ENCODE measurements at regions of chr11 and their contacts with region 1.

Region 1: GRCh38 chr11:62427630-62428233 is 8.9 kb downstream of the SCGB1A1 start:
- DNase-seq: no peak
- H3K4me3 ChIP-seq: no peak overlapping the region
- H3K27ac ChIP-seq: no peak overlapping the region
- H3K4me1 ChIP-seq: no peaks in the 10 kb centered on the region
- H3K27me3 ChIP-seq: peaks cover 0 to 3% of the 10 kb centered on the region in 2 experiments
- CTCF ChIP-seq: no peak
- POLR2A ChIP-seq: no peak

Region 2: DNA sequence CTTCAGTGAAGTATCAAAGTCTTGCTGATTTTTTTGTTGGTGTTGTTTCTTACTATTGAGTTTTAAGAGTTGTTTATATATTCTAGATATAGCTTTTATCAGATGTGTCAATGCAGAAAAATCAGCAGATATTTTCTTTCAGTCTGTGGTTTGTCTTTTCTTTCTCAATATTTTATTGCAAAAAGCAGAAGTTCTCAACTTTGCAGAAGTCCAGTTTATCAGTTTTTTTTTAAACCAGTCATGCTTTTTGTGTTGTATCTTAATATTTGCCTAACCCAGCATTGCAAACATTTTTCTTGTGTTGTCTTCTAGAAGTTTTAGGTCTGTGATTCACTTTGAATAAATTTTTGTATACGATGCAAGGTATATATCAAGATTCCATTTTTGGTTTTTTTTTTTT is 83.5 kb before region 1 on chr11:
- CTCF ChIA-PET with region 1: no interaction called
- POLR2A ChIA-PET with region 1: no interaction called
- dilution Hi-C with region 1: no loop called
- intact Hi-C with region 1: no loop called
- DNase-seq: no peak
- H3K4me3 ChIP-seq: no peak overlapping the region
- H3K27ac ChIP-seq: no peak overlapping the region
- H3K4me1 ChIP-seq: peaks cover 17% of the 10 kb centered on the region
- H3K27me3 ChIP-seq: no peaks in the 10 kb centered on the region
- CTCF ChIP-seq: no peak
- POLR2A ChIP-seq: no peak

Region 3: DNA sequence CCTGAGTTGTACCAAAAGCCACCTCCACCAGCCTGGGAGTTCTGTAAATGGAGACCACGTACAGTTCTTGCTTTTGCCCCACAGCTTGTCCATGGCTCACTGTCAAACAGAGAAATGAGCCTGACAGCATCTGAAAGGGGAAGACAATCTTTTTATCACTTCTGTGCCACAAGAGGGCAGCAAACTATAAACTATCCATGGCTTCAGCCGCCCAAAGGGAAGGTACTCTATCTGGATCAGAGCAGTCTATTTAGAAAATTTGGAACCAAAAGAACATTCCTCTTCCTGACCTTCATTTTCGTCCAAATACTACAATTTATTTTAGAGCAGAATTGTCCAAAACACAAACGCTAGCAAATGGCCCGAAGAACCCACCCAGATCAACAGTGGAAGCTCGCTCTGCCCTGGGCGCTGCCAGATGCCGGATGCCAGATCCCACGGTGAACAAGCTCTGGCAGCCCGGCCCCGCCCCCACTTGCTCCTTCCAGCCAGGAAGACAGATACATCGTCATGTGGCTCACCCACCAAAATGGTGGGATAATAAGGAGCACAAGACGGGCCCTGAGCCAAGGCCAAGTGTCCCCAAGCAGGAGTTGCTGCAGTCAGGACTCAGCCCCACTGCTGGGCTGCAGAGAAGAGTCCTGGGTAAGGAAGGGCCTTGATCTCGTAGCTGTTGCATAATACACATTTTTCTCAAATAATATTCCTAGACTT is 32.8 kb before region 1 on chr11:
- CTCF ChIA-PET with region 1: interaction called, 65 read pairs
- POLR2A ChIA-PET with region 1: interaction called, 4 read pairs
- dilution Hi-C with region 1: no loop called
- intact Hi-C with region 1: no loop called
- DNase-seq: peak; percentile 86
- H3K4me3 ChIP-seq: peak overlapping the region; percentile 20 to 71 (median 38)
- H3K27ac ChIP-seq: peak overlapping the region; percentile 15
- H3K4me1 ChIP-seq: peaks cover 4% of the 10 kb centered on the region
- H3K27me3 ChIP-seq: no peaks in the 10 kb centered on the region
- CTCF ChIP-seq: peak; percentile 47 to 56
- POLR2A ChIP-seq: no peak

Region 4: DNA sequence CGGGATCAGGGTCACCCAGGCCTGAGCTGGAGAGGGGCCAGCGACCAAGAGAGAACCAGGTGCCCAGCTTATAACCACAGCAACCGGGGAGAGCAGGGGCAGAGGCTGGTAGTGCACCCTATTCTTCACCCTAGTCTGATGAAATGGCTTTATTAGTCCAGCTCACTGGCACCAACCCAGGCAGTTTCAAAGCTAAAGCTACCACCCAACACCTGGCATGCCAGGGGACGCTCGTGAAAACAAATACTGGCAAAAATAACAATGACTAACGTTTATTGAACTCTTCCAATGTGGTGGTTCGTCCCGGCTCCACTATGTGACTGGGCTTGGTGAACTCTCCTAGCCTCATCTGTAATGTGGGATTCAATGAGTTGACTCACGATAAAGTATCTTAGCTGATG is 21.7 kb after region 1 on chr11:
- CTCF ChIA-PET with region 1: interaction called, 23 read pairs
- POLR2A ChIA-PET with region 1: no interaction called
- dilution Hi-C with region 1: no loop called
- intact Hi-C with region 1: no loop called
- DNase-seq: no peak
- H3K4me3 ChIP-seq: no peak overlapping the region
- H3K27ac ChIP-seq: no peak overlapping the region
- H3K4me1 ChIP-seq: no peaks in the 10 kb centered on the region
- H3K27me3 ChIP-seq: no peaks in the 10 kb centered on the region
- CTCF ChIP-seq: no peak
- POLR2A ChIP-seq: no peak

Region 5: GRCh38 chr11:62497132-62497915 is 69.6 kb after region 1 on chr11:
- CTCF ChIA-PET with region 1: interaction called, 21 read pairs
- POLR2A ChIA-PET with region 1: no interaction called
- dilution Hi-C with region 1: no loop called
- intact Hi-C with region 1: loop called (anchors 2 kb)
- DNase-seq: peak; percentile 68
- H3K4me3 ChIP-seq: no peak overlapping the region
- H3K27ac ChIP-seq: peak overlapping the region; percentile 58
- H3K4me1 ChIP-seq: peaks cover 25% of the 10 kb centered on the region
- H3K27me3 ChIP-seq: no peaks in the 10 kb centered on the region
- CTCF ChIP-seq: peak; percentile 27 to 33
- POLR2A ChIP-seq: no peak

Region 6: DNA sequence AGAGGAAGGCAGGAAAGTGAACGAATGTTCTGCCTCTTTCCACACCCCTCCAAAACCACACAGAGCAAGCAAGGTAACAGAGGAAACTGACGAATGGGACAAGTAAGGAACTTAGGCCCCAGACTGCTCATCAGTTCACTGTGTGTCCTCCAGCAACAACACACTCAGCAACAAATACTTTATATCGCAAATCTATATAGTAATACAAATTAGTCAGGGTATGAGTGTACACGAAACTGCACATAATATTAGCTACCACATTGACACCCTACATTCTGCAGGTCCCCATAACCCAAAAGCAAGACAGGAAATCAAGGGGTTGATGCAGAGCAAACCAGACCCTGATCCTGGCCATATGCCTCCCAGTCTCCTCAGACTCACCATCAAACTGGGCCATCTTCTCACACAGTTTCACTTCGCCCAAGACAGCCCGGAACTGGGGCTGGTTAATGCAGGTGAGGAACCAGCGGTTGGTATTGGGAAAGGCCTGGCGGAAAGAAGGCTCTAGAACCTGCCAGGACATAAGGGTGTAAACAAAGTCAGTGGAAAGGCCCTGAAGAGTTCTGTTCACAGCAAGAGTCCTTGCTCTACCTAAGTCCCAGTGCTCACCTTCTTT is 139.4 kb after region 1 on chr11:
- CTCF ChIA-PET with region 1: interaction called, 162 read pairs
- POLR2A ChIA-PET with region 1: no interaction called
- dilution Hi-C with region 1: no loop called
- intact Hi-C with region 1: no loop called
- DNase-seq: no peak
- H3K4me3 ChIP-seq: no peak overlapping the region
- H3K27ac ChIP-seq: no peak overlapping the region
- H3K4me1 ChIP-seq: peaks cover 15% of the 10 kb centered on the region
- H3K27me3 ChIP-seq: no peaks in the 10 kb centered on the region
- CTCF ChIP-seq: no peak
- POLR2A ChIP-seq: no peak

Region 7: DNA sequence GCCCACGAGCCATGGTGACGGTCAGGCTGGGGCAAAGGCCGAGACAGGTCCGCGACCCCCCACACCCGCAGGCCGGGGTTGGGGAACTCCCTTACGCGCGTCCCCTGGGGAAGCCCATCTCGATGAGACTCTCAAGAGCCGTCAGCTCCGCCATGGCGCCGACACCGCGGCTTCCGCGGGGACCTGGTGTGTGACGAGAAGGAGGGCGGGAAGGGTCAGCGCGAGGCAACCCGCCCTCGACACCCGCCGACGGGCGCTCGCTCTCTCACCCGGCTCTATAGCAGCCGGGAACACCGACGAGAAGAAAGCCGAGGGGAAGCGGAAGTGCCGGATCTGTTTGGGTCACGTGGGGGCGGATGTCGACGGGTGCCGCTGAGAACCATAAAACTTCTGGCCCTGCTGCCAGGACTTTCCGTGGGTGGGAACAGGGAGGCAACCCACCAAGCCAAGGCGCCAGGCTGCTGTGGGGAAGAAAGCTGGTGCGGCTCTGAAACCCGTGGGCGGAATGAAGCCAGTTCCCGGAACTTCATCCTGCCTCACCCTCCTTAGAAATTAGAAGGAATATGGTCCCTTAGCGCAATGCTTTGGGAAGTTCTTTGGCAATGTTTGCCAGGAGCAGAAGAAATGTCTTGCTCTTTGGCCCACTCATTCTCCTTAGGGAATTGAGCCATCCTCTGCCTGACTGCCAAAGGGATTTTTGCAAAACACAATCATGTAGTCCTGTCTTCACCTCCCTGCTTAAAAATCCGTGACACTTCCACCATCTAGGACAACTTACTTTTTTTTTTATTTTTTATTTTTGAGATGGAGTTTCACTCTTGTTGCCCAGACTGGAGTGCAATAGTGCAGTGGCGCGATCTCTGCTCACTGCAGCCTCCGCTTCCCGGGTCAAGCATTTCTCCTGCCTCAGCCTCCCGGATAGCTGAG is 251.3 kb after region 1 on chr11 and contains the start of gene UBXN1:
- CTCF ChIA-PET with region 1: interaction called, 12 read pairs
- POLR2A ChIA-PET with region 1: no interaction called
- dilution Hi-C with region 1: no loop called
- intact Hi-C with region 1: no loop called
- DNase-seq: peak; percentile 89
- H3K4me3 ChIP-seq: peak within 1 kb of the TSS; percentile 76 to 93 (median 79)
- H3K27ac ChIP-seq: peak within 1 kb of the TSS; percentile 74
- H3K4me1 ChIP-seq: peaks cover 11% of the 10 kb centered on the region
- H3K27me3 ChIP-seq: no peaks in the 10 kb centered on the region
- CTCF ChIP-seq: no peak
- POLR2A ChIP-seq: peak; percentile 84
- total RNA-seq, gene UBXN1: 112 and 113 TPM in 2 replicates